PC-3 (cell line): ENCODE measurements at regions of chr10 and their contacts with region 1.

Region 1: GRCh38 chr10:73413528-73414229 is at the start of gene ANXA7:
- DNase-seq: peak; percentile 100
- ATAC-seq: peak; percentile 86
- H3K4me3 ChIP-seq: peak within 1 kb of the TSS; percentile 65
- H3K27ac ChIP-seq: peak within 1 kb of the TSS; percentile 73
- H3K4me1 ChIP-seq: peaks cover 64% of the 10 kb centered on the region
- H3K27me3 ChIP-seq: no peaks in the 10 kb centered on the region
- CTCF ChIP-seq: peak; percentile 62
- total RNA-seq, gene ANXA7: 478 and 561 TPM in 2 replicates

Region 2: DNA sequence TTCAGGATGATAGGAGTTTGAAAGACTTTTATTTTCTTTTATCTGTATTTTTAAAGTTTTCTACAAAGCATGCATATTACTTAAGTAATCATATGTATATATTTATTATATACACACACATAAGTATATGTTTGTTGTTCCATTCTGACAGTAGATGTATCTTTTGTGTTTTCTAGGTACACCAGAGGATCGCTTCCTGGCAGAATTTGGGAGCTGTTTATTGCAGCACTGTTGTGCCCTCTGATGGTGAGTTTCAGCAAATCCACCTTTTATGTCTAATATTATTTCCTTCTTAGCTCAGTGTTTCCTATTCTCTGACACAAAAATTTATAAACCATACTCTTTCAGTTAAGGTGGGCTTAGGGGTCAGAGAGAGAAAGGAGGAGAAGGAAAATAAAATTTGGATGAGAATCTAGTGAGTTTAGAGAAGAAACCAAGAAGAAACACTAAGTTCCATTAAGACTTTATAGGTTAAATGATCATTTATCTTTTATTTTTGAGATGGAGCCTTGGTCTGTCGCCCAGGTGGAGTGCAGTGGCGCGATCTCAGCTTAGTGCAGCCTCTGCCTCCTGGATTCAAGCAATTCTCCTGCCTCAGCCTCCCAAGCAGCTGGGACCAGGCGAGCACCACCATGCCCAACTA is 579.4 kb before region 1 on chr10:
- CTCF ChIA-PET with region 1: interaction called, 6 read pairs
- POLR2A ChIA-PET with region 1: no interaction called
- intact Hi-C with region 1: loop called (anchors 2 kb)
- DNase-seq: peak; percentile 98
- ATAC-seq: peak; percentile 86
- H3K4me3 ChIP-seq: peak overlapping the region; percentile 1; the same call in 1 of the 2 replicates
- H3K27ac ChIP-seq: no peak overlapping the region
- H3K4me1 ChIP-seq: no peaks in the 10 kb centered on the region
- H3K27me3 ChIP-seq: peaks cover 31% of the 10 kb centered on the region
- CTCF ChIP-seq: peak; percentile 100

Region 3: DNA sequence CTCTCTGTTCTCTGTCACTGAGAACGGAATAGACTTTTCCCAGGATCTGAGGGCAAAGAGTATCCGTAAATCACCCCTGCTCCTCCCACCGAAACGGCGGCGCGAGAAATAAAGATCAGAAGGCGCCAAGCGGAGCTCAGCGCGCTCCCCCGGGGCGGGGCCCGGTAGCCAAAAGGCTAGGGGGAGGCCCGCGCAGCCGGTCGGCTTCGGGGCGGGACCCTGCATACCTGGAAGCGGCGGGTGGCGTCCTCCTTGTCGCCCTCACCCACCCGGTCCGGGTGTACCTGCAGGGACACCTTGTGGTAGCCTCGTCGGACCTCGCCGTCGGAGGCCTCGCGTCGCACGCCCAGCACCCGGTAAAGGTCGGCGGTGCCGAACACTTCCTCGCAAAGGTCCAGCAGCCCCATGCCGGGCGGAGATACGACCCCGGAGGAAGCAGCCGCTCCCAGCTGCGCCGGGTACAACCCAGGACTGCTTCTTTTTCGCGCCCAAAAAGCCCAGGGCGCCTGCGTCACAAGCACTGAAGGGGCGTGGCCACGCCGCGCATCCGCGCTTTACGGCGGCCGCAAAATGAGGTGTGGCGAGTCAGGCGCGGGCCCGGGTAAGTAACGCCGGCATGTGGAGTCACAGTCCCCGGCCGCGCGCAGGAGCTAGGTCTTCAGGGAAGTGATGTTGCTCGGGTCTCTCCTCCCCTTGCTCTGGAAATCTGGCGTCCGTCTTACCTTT is 166.7 kb before region 1 on chr10 and contains the start of gene DNAJC9:
- CTCF ChIA-PET with region 1: no interaction called
- POLR2A ChIA-PET with region 1: interaction called, 4 read pairs
- intact Hi-C with region 1: loop called (anchors 1 kb)
- DNase-seq: peak; percentile 100
- ATAC-seq: peak; percentile 84
- H3K4me3 ChIP-seq: peak within 1 kb of the TSS; percentile 69
- H3K27ac ChIP-seq: peak within 1 kb of the TSS; percentile 80
- H3K4me1 ChIP-seq: peaks cover 50% of the 10 kb centered on the region
- H3K27me3 ChIP-seq: no peaks in the 10 kb centered on the region
- CTCF ChIP-seq: peak; percentile 56
- total RNA-seq, gene DNAJC9: 282 and 283 TPM in 2 replicates

Region 4: DNA sequence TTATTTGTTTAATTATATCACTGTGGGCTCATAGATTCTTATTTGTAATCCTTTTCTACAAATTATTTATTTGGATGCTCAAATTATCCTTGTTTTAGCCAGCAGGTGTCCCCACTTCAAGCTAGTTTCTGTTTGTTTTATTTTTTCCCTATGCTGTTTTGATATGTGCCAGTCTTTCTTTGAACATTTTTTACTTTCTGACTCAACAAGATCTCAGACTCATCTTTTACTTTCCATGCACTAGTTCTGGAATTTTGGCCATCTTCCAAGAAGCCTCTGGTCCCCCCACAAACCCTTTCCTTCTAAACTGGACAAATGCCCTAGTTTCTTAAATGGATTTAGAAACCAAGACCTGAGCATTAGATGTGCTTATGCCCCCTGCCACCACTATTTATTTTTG is 149.7 kb before region 1 on chr10:
- CTCF ChIA-PET with region 1: interaction called, 13 read pairs
- POLR2A ChIA-PET with region 1: interaction called, 4 read pairs
- intact Hi-C with region 1: loop called (anchors 1 kb)
- DNase-seq: peak; percentile 90
- ATAC-seq: peak; percentile 37
- H3K4me3 ChIP-seq: no peak overlapping the region
- H3K27ac ChIP-seq: no peak overlapping the region
- H3K4me1 ChIP-seq: peaks cover 20% of the 10 kb centered on the region
- H3K27me3 ChIP-seq: no peaks in the 10 kb centered on the region; the same call in 1 of the 2 replicates
- CTCF ChIP-seq: peak; percentile 99

Region 5: DNA sequence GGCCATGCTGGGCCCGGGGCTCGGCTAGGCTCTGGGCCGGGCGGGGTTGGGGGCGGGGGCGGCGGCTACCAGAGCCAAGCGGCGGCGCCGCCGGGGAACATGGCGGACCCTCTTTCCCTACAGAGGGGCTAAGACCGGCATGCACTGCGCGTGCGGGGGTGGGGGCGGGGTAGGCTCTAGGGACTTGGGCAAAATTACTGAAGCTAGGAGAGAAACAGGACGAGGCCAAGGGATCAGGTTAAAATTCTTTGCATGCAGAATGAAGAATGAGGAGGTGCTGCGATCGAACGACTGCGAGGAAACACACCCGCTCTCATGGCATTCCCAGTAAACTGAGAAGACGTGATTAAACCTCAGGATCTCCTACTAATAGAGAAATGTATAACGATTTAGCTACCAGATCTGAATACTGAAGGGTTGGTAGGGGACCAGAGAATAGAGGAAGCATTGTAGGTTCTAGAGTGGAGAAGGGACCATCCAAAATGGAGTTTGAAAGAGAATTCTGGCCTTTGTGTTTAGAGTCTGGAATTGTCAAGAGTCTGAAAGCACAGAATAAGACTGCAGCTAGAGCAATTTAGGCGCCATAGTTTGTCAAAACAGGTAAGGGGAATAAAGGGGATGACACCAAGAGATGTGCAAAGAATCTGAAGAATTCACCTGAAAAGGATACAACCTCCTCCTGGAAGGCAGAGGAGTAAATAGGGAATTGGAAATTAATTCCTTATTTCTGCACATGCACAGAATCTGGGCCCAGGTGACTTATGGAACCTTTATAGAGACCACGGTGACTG is 82.4 kb after region 1 on chr10 and contains the start of gene PPP3CB:
- CTCF ChIA-PET with region 1: no interaction called
- POLR2A ChIA-PET with region 1: interaction called, 58 read pairs
- intact Hi-C with region 1: loop called (anchors 1 kb)
- DNase-seq: peak; percentile 100
- ATAC-seq: peak; percentile 79
- H3K4me3 ChIP-seq: peak within 1 kb of the TSS; percentile 83
- H3K27ac ChIP-seq: peak within 1 kb of the TSS; percentile 80
- H3K4me1 ChIP-seq: peaks cover 28% of the 10 kb centered on the region
- H3K27me3 ChIP-seq: no peaks in the 10 kb centered on the region
- CTCF ChIP-seq: no peak
- total RNA-seq, gene PPP3CB: 43.8 and 66.5 TPM in 2 replicates

Region 6: GRCh38 chr10:73586583-73586984 is 172.9 kb after region 1 on chr10:
- CTCF ChIA-PET with region 1: no interaction called
- POLR2A ChIA-PET with region 1: no interaction called
- intact Hi-C with region 1: loop called (anchors 2 kb)
- DNase-seq: peak; percentile 100
- ATAC-seq: peak; percentile 75
- H3K4me3 ChIP-seq: peak overlapping the region; percentile 19
- H3K27ac ChIP-seq: peak overlapping the region; percentile 66
- H3K4me1 ChIP-seq: peaks cover 68% of the 10 kb centered on the region
- H3K27me3 ChIP-seq: no peaks in the 10 kb centered on the region
- CTCF ChIP-seq: no peak

Region 7: DNA sequence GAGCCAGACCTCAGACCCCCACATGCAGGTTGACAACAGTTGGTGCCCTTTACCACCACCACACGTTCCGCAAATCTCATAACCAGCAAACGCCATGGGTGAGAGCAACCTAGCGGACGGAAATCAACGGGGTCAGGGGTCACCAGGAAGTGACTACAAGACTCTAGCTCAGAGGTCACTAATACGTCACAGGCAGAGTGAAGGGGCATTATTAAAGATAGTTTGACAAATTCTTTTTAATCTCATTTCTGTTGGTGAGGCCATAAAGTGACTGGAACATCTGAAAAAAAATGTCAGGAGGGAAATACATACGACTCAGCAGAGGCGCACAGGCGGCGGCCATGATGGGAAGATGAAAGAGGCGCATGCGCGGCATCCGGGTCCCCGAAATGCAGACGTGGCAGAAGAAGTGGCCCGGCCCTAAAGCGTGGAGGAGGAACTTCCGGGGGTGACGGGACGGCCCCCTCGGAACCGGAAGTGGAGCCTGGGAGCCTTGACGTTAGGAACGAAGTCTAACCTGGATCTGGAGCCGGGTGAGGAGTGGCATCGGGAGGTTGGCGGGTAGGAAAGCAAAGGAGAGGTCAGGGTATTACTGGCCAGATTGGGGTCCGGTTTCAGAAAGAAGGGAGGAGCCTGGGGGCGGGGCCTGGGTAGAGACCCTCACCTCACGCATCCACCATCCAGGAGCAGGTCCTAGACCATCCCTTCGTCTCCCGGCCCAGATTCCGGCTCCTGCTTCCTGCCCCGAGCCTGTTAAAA is 330.4 kb after region 1 on chr10 and contains the start of gene SEC24C:
- CTCF ChIA-PET with region 1: no interaction called
- POLR2A ChIA-PET with region 1: no interaction called
- intact Hi-C with region 1: loop called (anchors 10 kb)
- DNase-seq: peak; percentile 100
- ATAC-seq: peak; percentile 83
- H3K4me3 ChIP-seq: peak within 1 kb of the TSS; percentile 68
- H3K27ac ChIP-seq: peak within 1 kb of the TSS; percentile 64
- H3K4me1 ChIP-seq: peaks cover 43% of the 10 kb centered on the region
- H3K27me3 ChIP-seq: no peaks in the 10 kb centered on the region
- CTCF ChIP-seq: no peak
- total RNA-seq, gene SEC24C: 285 and 325 TPM in 2 replicates